ENCODE measurements at regions of chr2 and their contacts with region 1.

Region 1: GRCh38 chr2:61006486-61007105 is 10.9 kb upstream of the PEX13 start:
- DNase-seq: no peak
- ATAC-seq: no peak
- H3K4me3 ChIP-seq: no peak overlapping the region
- H3K27ac ChIP-seq: no peak overlapping the region
- H3K4me1 ChIP-seq: no peaks in the 10 kb centered on the region
- H3K27me3 ChIP-seq: no peaks in the 10 kb centered on the region

Region 2: DNA sequence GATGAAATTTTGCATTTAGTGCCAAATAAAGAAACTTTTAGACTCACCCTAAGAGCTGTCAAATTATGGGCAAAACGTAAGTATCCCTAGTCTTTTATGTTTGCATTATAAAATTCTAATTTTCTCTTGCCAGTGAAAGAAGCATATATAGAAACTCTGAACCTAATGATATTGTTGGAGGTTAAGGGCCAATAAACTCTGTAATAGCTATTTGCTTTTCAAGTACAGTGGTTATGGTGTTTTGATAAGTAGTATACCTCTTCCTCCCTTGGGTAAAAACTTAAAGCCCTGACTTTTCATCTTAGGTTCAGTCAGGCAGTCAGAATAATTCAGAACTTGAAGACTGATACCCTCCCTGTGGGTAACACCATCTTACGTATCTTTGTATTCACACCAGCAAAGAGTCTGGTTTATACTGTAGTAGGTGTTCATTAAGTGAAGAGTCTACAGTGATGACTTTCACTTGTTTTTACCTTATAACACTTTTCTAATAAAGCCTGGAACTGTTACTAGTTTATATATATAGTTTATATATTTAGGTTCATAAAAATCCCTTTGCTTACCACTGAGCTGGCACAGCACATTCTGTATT is 231.5 kb before region 1 on chr2:
- intact Hi-C with region 1: loop called in 1 of 2 experiments (anchors 10 kb)
- DNase-seq: no peak
- ATAC-seq: no peak
- H3K4me3 ChIP-seq: no peak overlapping the region
- H3K27ac ChIP-seq: no peak overlapping the region
- H3K4me1 ChIP-seq: no peaks in the 10 kb centered on the region
- H3K27me3 ChIP-seq: no peaks in the 10 kb centered on the region

Region 3: DNA sequence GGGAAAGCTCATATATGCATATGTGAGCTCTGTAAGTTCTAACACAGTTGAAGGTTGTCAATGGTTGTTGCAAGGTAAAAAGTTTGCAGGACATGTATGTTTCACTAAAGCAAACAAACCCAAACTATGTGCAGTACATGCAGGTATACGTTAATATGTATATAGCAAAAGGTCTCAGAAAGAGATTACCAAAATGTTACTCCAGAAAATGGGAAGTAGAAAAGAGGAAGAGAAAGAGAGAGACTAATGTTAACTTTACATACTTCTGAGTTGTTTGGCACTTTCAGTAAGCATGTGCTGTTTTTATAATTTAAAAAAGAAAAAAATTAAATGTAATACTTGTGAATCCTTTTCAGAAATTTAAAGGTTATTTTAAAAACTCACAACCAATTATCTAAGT is 21.9 kb before region 1 on chr2:
- intact Hi-C with region 1: no loop called
- DNase-seq: no peak
- ATAC-seq: no peak
- H3K4me3 ChIP-seq: no peak overlapping the region
- H3K27ac ChIP-seq: no peak overlapping the region
- H3K4me1 ChIP-seq: no peaks in the 10 kb centered on the region
- H3K27me3 ChIP-seq: no peaks in the 10 kb centered on the region